GM23248 (cell line): ENCODE measurements at regions of chr5 and their contacts with region 1.

Region 1: GRCh38 chr5:153959134-153959957 is 79.4 kb downstream of the FAM114A2 start:
- DNase-seq: peak; percentile 52
- H3K4me3 ChIP-seq: no peak overlapping the region
- H3K27ac ChIP-seq: no peak overlapping the region
- H3K4me1 ChIP-seq: peaks cover 23% of the 10 kb centered on the region
- H3K27me3 ChIP-seq: no peaks in the 10 kb centered on the region

Region 2: GRCh38 chr5:153476767-153477166 is 482.6 kb before region 1 on chr5:
- in situ Hi-C with region 1: no loop called
- DNase-seq: peak; percentile 84
- H3K4me3 ChIP-seq: no peak overlapping the region
- H3K27ac ChIP-seq: no peak overlapping the region
- H3K4me1 ChIP-seq: peaks cover 18% of the 10 kb centered on the region
- H3K27me3 ChIP-seq: no peaks in the 10 kb centered on the region

Region 3: DNA sequence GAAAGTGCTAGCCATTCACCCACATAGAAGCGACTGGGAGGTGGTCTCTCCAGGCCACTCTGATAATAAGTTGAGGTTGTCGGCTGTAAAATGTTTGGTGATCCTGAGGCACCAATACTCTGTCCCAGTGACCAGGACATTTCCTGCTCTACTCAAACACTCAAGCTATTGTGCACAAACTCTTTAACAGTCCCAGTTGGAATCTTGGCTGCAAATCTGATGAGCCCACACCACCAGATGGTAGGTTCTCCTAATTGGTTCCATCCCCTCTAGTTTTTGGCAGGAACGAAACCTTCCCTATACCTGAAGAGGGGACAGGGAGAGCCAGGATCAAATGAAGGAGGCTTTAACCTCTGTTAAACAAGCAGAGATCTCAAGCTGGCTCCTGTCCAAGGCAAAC is 454.6 kb before region 1 on chr5:
- in situ Hi-C with region 1: loop called (anchors 10 kb)
- DNase-seq: no peak
- H3K4me3 ChIP-seq: no peak overlapping the region
- H3K27ac ChIP-seq: no peak overlapping the region
- H3K4me1 ChIP-seq: no peaks in the 10 kb centered on the region
- H3K27me3 ChIP-seq: no peaks in the 10 kb centered on the region

Region 4: GRCh38 chr5:154701110-154701572 is 741.8 kb after region 1 on chr5:
- in situ Hi-C with region 1: no loop called
- DNase-seq: no peak
- H3K4me3 ChIP-seq: no peak overlapping the region
- H3K27ac ChIP-seq: no peak overlapping the region
- H3K4me1 ChIP-seq: peaks cover 13% of the 10 kb centered on the region; the same call in 1 of the 2 replicates
- H3K27me3 ChIP-seq: no peaks in the 10 kb centered on the region